Colonic mucosa (tissue), 4 donors: ENCODE measurements at regions of chr22 and their contacts with region 1.

Region 1: GRCh38 chr22:37686002-37686982 is at the start of gene NOL12:
- DNase-seq: peak; percentile 87
- H3K4me3 ChIP-seq: peak within 1 kb of the TSS; percentile 74
- H3K27ac ChIP-seq: peak within 1 kb of the TSS; percentile 77
- H3K4me1 ChIP-seq: peaks cover 29% of the 10 kb centered on the region
- H3K27me3 ChIP-seq: no peaks in the 10 kb centered on the region
- CTCF ChIP-seq: no peak
- total RNA-seq, gene NOL12: 25.2 to 48.4 TPM

Region 2: GRCh38 chr22:37623075-37624016 is 62.9 kb before region 1 on chr22:
- intact Hi-C with region 1: loop called (anchors 2 kb)
- DNase-seq: peak; percentile 69
- H3K4me3 ChIP-seq: no peak overlapping the region
- H3K27ac ChIP-seq: no peak overlapping the region
- H3K4me1 ChIP-seq: peaks cover 30% of the 10 kb centered on the region
- H3K27me3 ChIP-seq: no peaks in the 10 kb centered on the region
- CTCF ChIP-seq: peak; percentile 93

Region 3: GRCh38 chr22:37643225-37643847 is 43.0 kb before region 1 on chr22:
- intact Hi-C with region 1: loop called (anchors 5 kb)
- DNase-seq: peak; percentile 93
- H3K4me3 ChIP-seq: no peak overlapping the region
- H3K27ac ChIP-seq: peak overlapping the region; percentile 79
- H3K4me1 ChIP-seq: peaks cover 17% of the 10 kb centered on the region
- H3K27me3 ChIP-seq: no peaks in the 10 kb centered on the region
- CTCF ChIP-seq: peak; percentile 94

Region 4: GRCh38 chr22:37734964-37735451 is 48.7 kb after region 1 on chr22:
- intact Hi-C with region 1: loop called (anchors 5 kb)
- DNase-seq: peak; percentile 57
- H3K4me3 ChIP-seq: no peak overlapping the region
- H3K27ac ChIP-seq: no peak overlapping the region
- H3K4me1 ChIP-seq: peaks cover 7% of the 10 kb centered on the region
- H3K27me3 ChIP-seq: no peaks in the 10 kb centered on the region
- CTCF ChIP-seq: peak; percentile 32

Region 5: GRCh38 chr22:37797874-37798500 is 111.7 kb after region 1 on chr22:
- intact Hi-C with region 1: loop called (anchors 10 kb)
- DNase-seq: no peak
- H3K4me3 ChIP-seq: no peak overlapping the region
- H3K27ac ChIP-seq: no peak overlapping the region
- H3K4me1 ChIP-seq: peaks cover 3% of the 10 kb centered on the region
- H3K27me3 ChIP-seq: no peaks in the 10 kb centered on the region
- CTCF ChIP-seq: no peak